A673 (cell line): ENCODE measurements at regions of chr11 and their contacts with region 1.

Region 1: GRCh38 chr11:26662916-26663315 is 58.9 kb downstream of the SLC5A12 start:
- DNase-seq: no peak
- H3K4me3 ChIP-seq: no peak overlapping the region
- H3K27ac ChIP-seq: no peak overlapping the region
- H3K4me1 ChIP-seq: no peaks in the 10 kb centered on the region
- H3K27me3 ChIP-seq: peaks cover 97% of the 10 kb centered on the region
- CTCF ChIP-seq: no peak

Region 2: DNA sequence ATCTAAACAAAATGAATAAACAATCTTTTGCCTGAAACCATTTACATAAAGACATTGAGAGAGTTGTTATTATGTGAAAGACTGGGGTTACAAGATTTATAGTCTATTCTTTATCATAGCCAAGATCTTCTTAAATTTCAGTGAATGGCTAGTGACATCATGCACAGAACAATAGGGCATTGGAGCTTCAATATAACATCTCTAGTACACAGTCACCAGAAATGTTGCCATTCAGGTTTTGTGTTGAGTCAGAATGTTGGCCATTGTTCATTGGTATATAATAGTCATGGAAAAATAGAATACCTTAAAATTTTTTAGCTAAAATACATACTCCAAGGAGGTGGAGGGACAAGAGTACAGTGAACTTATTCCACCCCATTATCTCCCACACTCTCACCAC is 14.7 kb after region 1 on chr11:
- CTCF ChIA-PET with region 1: no interaction called
- POLR2A ChIA-PET with region 1: no interaction called
- intact Hi-C with region 1: loop called (anchors 2 kb)
- DNase-seq: no peak
- H3K4me3 ChIP-seq: no peak overlapping the region
- H3K27ac ChIP-seq: no peak overlapping the region
- H3K4me1 ChIP-seq: no peaks in the 10 kb centered on the region
- H3K27me3 ChIP-seq: peaks cover 47% of the 10 kb centered on the region
- CTCF ChIP-seq: no peak

Region 3: GRCh38 chr11:26719289-26719973 is 56.5 kb after region 1 on chr11:
- CTCF ChIA-PET with region 1: no interaction called
- POLR2A ChIA-PET with region 1: no interaction called
- intact Hi-C with region 1: no loop called
- DNase-seq: no peak
- H3K4me3 ChIP-seq: no peak overlapping the region
- H3K27ac ChIP-seq: no peak overlapping the region
- H3K4me1 ChIP-seq: peaks cover 3% of the 10 kb centered on the region
- H3K27me3 ChIP-seq: peaks cover 38% of the 10 kb centered on the region
- CTCF ChIP-seq: peak; percentile 36